ENCODE measurements at regions of chr5 and their contacts with region 1.

Region 1: DNA sequence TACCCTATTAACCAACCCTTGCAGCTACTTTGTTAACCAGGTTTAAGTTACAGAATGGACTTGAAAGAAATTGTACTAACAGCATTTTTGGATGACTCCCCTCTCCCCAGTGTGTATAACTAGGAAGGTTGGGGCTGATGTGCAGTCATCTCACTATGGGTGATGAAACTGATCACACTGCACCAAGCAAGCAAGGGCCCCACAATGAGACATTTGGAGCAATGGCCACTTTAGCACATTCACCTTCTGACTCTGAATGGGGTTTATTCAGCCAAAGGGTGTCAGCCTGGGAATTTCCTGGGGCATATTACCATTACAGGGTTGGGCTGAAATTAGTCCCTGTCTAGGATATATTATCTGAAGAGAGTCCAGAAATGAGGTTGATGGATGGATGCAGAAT is 18.7 kb upstream of the CYFIP2 start:
- DNase-seq: peak; percentile 80
- H3K4me3 Mint-ChIP-seq: peak overlapping the region; percentile 24
- H3K27ac Mint-ChIP-seq: peak overlapping the region; percentile 96
- H3K4me1 Mint-ChIP-seq: peaks cover 94% of the 10 kb centered on the region
- H3K27me3 Mint-ChIP-seq: no peaks in the 10 kb centered on the region

Region 2: DNA sequence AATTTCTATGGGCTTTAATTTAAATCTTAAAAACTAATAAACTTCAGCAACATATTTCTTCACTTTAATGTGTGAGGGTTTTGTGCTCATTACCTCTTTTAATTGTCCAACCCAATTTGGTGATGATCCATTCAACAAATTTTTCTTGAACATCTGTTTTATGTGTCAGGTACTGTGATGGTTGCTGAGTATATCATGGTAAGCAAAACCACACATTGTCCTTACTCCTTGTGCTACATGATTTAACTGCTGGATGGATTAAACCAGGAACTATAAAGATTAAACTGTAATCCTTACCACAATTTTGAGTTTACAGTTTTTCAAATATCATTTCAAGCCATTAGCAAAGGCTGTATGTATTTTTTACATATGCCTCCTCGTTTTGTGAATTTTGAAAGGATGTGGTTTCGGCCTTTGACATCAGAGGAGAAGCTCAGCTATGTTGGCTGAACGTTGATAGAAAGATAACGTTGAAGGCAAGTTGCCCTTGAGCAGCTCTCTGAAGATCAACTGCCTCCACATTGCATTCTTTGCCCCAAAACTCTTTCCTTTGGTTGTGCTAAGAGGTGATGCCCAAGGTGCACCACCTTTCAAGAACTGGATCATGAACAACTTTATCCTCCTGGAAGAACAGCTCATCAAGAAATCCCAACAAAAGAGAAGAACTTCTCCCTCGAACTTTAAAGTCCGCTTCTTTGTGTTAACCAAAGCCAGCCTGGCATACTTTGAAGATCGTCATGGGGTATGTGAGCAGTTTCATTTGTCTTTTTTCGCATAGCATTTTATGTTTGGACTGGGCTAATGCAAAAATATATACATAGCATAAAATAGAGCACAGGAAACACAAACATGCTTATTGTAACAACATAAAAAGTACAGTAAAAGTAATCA is 66.6 kb before region 1 on chr5 and contains the start of gene ITK:
- CTCF ChIA-PET with region 1: interaction called, 3 read pairs
- intact Hi-C with region 1: loop called (anchors 1 kb)
- DNase-seq: no peak
- H3K4me3 Mint-ChIP-seq: peak within 1 kb of the TSS; percentile 98
- H3K27ac Mint-ChIP-seq: peak within 1 kb of the TSS; percentile 100
- H3K4me1 Mint-ChIP-seq: peaks cover 50% of the 10 kb centered on the region
- H3K27me3 Mint-ChIP-seq: no peaks in the 10 kb centered on the region
- total RNA-seq, gene ITK: 340 TPM

Region 3: DNA sequence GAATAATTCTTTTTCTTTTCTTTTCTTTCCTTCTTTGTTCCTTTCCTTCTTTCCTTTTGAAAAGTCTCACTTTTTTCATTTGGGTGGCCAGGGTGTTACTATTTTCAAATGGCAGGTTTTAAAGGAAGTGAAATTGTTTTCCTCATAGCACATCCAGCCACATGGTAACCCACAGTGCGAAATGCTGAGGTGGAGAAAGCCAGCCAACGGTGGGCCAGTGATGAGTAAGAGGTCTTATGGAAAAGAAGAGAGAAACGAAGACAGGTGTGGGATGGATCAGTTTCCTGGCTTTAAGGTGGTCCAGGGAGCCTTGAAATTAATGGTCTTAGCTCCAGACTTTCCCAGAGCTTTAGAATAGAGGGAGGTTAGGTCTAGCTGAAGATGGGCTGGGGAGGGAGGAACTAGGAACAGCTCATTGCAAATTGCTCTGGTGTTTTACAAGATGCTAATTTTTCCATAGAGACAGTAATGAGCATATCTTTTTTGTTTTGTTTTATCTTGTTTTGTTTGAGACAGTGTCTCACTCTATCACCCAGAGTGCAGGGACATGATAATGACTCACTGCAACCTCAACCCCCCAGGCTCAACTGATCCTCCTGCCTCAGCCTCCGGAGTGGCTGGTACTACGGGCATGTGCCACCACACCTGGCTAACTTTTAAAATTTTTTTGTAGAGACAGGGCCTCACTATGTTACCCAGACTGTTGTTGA is 48.8 kb before region 1 on chr5:
- CTCF ChIA-PET with region 1: no interaction called
- intact Hi-C with region 1: loop called (anchors 1 kb)
- DNase-seq: peak; percentile 80
- H3K4me3 Mint-ChIP-seq: peak overlapping the region; percentile 48
- H3K27ac Mint-ChIP-seq: peak overlapping the region; percentile 100
- H3K4me1 Mint-ChIP-seq: peaks cover 93% of the 10 kb centered on the region
- H3K27me3 Mint-ChIP-seq: no peaks in the 10 kb centered on the region

Region 4: GRCh38 chr5:157233515-157233914 is 13.8 kb before region 1 on chr5:
- CTCF ChIA-PET with region 1: interaction called, 4 read pairs
- intact Hi-C with region 1: loop called (anchors 1 kb)
- DNase-seq: peak; percentile 54
- H3K4me3 Mint-ChIP-seq: peak overlapping the region; percentile 53
- H3K27ac Mint-ChIP-seq: peak overlapping the region; percentile 96
- H3K4me1 Mint-ChIP-seq: peaks cover 82% of the 10 kb centered on the region
- H3K27me3 Mint-ChIP-seq: no peaks in the 10 kb centered on the region